ENCODE measurements at regions of chr17 and their contacts with region 1.

Region 1: GRCh38 chr17:74659898-74660297 is 36.4 kb upstream of the CD300E start:
- H3K4me3 Mint-ChIP-seq: no peak overlapping the region
- H3K27ac Mint-ChIP-seq: no peak overlapping the region
- H3K4me1 Mint-ChIP-seq: peaks cover 23% of the 10 kb centered on the region
- H3K27me3 Mint-ChIP-seq: peaks cover 30% of the 10 kb centered on the region

Region 2: DNA sequence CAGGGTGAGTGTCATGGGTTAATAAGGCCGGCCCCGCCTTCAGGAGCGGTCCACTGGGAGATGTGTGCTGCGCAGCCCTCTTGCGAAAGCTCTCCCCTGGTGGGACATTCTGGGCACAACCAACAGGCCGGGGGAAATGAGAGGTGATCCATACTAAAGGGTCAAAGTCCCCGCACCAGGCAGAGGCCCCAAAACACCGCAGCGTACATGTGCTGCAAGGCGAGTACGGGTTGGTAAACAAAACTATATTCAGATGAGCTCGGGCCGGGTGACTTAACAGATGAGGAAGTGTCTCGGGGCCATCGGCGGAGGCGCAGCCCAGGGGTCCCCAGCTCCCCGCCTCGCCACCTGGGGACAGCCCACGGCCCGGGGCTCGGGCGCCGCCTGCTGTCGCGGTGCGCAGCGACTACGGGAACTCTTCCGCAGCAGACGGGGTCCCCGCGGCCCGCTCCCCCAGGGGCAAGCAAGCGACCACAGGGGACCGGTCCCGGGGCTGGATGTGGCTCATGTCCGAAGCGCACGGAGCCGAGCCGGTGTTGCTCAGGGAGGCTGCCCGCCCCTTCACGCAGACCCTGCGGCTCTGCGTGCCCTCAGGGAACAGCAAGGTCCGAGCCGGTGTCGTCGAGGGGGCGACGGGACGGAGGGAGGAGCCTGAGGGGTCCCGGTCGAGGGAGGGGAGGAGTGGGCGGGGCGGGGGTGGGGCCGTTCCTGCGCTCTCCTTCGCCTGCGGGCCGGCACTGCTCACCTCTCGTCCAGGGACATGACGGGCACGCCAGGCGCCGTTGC is 76.8 kb after region 1 on chr17 and contains the start of gene RAB37:
- intact Hi-C with region 1: loop called (anchors 1 kb)
- H3K4me3 Mint-ChIP-seq: peak within 1 kb of the TSS; percentile 65
- H3K27ac Mint-ChIP-seq: no peak within 1 kb of the TSS
- H3K4me1 Mint-ChIP-seq: peaks cover 55% of the 10 kb centered on the region
- H3K27me3 Mint-ChIP-seq: peaks cover 31% of the 10 kb centered on the region

Region 3: DNA sequence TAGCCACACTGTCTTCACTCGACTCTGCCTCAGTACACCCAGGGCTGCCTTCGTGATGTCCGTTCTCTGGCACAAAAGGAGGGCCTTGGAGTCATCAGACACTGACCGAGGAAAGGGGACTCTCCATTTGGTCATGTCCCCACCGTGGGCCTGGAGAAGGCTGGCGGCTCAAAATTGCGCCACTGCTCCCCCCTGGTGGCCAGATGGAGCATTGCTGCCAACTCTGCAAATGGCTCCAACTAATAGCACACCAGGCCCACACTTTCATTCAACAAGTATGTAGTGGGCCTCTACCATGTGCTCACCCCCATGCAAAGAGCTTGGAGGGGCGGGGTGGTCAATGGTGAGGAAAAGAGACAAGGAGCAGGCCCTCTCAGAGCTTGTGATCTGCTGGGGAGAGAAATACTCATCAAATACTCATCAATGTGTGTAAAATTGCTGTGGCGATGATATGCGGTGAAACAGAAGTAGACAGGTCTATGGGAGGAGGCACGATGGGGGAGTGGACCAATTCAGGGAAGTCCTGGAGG is 205.0 kb after region 1 on chr17:
- intact Hi-C with region 1: loop called (anchors 5 kb)
- H3K4me3 Mint-ChIP-seq: no peak overlapping the region
- H3K27ac Mint-ChIP-seq: no peak overlapping the region
- H3K4me1 Mint-ChIP-seq: peaks cover 33% of the 10 kb centered on the region
- H3K27me3 Mint-ChIP-seq: peaks cover 50% of the 10 kb centered on the region

Measured in dendritic cell treated with granulocyte-macrophage colony-stimulating factor and Interleukin-4, amounts not matched to agents 40 ng/mL and 50 ng/mL, for 4 days (primary cell).